ENCODE measurements at regions of chr1 and their contacts with region 1.

Region 1: GRCh38 chr1:11838349-11839272 is 9.0 kb downstream of the NPPA start:
- DNase-seq: peak; percentile 64 to 74
- H3K4me3 ChIP-seq: no peak overlapping the region
- H3K27ac ChIP-seq: no peak overlapping the region
- H3K4me1 ChIP-seq: no peaks in the 10 kb centered on the region
- H3K27me3 ChIP-seq: no peaks in the 10 kb centered on the region
- CTCF ChIP-seq: peak; percentile 93 to 96 (median 94)
- POLR2A ChIP-seq: no peak

Region 2: GRCh38 chr1:11681071-11681771 is 157.4 kb before region 1 on chr1 and contains the start of gene MAD2L2:
- intact Hi-C with region 1: no loop called
- DNase-seq: peak; percentile 86 to 88
- H3K4me3 ChIP-seq: peak within 1 kb of the TSS; percentile 63 to 85
- H3K27ac ChIP-seq: peak within 1 kb of the TSS; percentile 79 to 87
- H3K4me1 ChIP-seq: no peaks in the 10 kb centered on the region
- H3K27me3 ChIP-seq: no peaks in the 10 kb centered on the region
- CTCF ChIP-seq: peak in 1 of 4 experiments; percentile 3
- POLR2A ChIP-seq: peak in 1 of 2 donors; percentile 83
- total RNA-seq, gene MAD2L2: 24.3 to 66.2 (median 34.6) TPM

Region 3: DNA sequence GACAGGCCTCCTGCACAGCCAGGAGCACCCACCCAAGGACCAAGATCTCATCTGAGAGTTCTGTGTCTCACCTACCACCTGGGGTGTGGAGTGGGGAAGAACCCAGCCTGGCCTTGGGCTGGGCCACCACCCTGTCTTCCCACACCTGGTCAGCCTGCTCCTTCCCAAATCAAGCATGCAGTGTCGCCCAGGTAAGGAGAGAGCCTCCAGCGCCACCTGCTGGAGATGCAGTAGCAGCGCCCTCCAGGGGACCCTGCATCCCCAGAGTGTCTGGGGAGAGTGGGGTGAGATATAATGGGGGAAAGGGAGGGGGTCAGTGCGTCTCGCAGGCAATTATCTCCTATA is 55.3 kb after region 1 on chr1:
- intact Hi-C with region 1: loop called (anchors 10 kb)
- DNase-seq: no peak
- H3K4me3 ChIP-seq: no peak overlapping the region
- H3K27ac ChIP-seq: no peak overlapping the region
- H3K4me1 ChIP-seq: no peaks in the 10 kb centered on the region
- H3K27me3 ChIP-seq: peaks cover 0 to 12% of the 10 kb centered on the region in 2 donors
- CTCF ChIP-seq: peak; percentile 56 to 67 (median 62)
- POLR2A ChIP-seq: no peak

Region 4: DNA sequence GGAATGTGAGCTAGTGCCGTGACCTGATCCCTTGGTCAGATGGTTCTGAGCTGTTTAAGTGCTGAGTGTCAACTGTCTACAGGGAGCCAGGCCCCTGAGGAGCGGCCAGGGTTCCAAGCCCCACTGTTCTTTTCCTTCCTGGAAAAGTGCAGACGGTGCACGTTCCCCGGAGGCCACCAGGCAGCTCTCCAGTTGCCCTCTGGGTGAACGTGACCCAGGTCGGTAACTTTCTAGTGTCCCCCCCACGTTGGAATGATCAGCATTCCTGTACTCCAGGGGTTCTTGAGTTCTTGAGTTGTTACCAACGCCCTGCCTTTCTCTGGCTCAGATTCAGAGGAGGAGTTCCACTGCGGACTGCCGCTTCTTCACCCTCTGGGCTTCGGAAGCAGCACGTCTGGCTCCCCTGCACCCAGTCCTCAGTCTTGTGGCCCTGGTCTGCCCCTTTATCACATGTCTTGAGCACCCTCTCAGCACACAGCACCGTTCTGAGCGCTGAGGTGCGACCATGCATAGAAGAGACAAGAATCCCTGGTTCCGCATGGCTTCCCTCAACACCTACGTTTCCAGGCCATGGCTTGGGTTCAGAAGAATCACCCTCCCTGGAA is 647.9 kb after region 1 on chr1:
- intact Hi-C with region 1: no loop called
- DNase-seq: peak; percentile 36 to 76
- H3K4me3 ChIP-seq: no peak overlapping the region
- H3K27ac ChIP-seq: peak overlapping the region; percentile 33 to 39
- H3K4me1 ChIP-seq: peaks cover 0 to 4% of the 10 kb centered on the region in 2 donors
- H3K27me3 ChIP-seq: no peaks in the 10 kb centered on the region
- CTCF ChIP-seq: no peak
- POLR2A ChIP-seq: no peak

Measured in uterus (tissue), 4 donors.